ENCODE measurements at regions of chr19 and their contacts with region 1.

Region 1: GRCh38 chr19:38792250-38793111 is 3.5 kb downstream of the LGALS7B start:
- DNase-seq: peak in 1 of 6 donors; percentile 46
- ATAC-seq: peak in 3 of 4 donors; percentile 15 to 38 (median 19)
- H3K4me3 ChIP-seq: peak overlapping the region in 1 of 4 donors; percentile 25
- H3K27ac ChIP-seq: no peak overlapping the region
- H3K4me1 ChIP-seq: no peaks in the 10 kb centered on the region
- H3K27me3 ChIP-seq: no peaks in the 10 kb centered on the region
- CTCF ChIP-seq: no peak

Region 2: DNA sequence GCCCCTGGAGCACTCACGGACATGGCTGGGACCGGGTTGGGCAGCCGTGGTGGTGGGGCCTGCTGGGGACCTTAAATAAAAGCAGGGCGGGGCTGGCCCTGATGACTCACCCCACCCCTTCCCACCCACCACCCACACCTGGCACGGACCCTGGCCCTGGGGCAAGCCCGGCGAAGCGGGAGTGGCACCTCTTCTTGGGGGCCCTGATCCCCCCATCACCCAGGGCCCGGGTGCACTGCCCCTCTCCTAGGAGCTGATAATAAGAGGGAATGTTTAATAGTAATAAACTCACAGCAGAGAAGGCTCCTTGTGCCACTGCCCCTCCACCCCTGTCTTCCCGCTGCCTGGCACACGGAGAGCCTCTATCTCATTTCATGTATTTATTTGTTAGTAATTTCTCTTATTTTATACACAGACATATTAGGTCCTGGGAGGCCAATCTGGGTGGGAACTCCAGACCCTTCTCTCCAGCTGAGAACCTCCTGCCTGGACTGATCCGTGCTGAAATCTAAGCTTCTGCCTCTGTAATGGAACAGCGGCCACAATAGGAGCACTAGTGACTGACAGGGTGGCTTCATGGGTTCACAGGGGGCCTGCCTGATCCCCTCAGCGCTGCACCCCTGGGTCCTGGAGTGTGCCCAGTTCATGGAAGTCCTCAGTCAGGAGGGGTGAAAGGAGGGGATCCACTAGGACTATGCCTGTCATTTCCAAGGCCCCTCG is 18.9 kb before region 1 on chr19 and contains the start of gene LGALS7:
- intact Hi-C with region 1: loop called in 1 of 3 experiments (anchors 2 kb)
- DNase-seq: no peak
- ATAC-seq: no peak
- H3K4me3 ChIP-seq: no peak within 1 kb of the TSS
- H3K27ac ChIP-seq: no peak within 1 kb of the TSS
- H3K4me1 ChIP-seq: no peaks in the 10 kb centered on the region
- H3K27me3 ChIP-seq: no peaks in the 10 kb centered on the region
- CTCF ChIP-seq: no peak
- total RNA-seq, gene LGALS7: not detected

Measured in pancreas (tissue), 10 donors.